ENCODE measurements at regions of chr9 and their contacts with region 1.

Region 1: GRCh38 chr9:134035041-134036039 is 10.1 kb downstream of the BRD3OS start:
- H3K4me3 ChIP-seq: no peak overlapping the region
- H3K27ac ChIP-seq: no peak overlapping the region
- H3K4me1 ChIP-seq: no peaks in the 10 kb centered on the region
- CTCF ChIP-seq: no peak

Region 2: GRCh38 chr9:134024828-134025605 is 10.3 kb before region 1 on chr9 and contains the start of gene BRD3OS:
- CTCF ChIA-PET with region 1: no interaction called
- POLR2A ChIA-PET with region 1: interaction called, 14 read pairs
- H3K4me3 ChIP-seq: peak within 1 kb of the TSS; percentile 50
- H3K27ac ChIP-seq: peak within 1 kb of the TSS; percentile 41; the same call in 1 of the 2 replicates
- H3K4me1 ChIP-seq: 0 out of 2 replicates have a peak, but pooled peaks cover 2% of the 10 kb centered on the region
- CTCF ChIP-seq: no peak

Measured in HEK293 (cell line).